ENCODE measurements at regions of chr15 and their contacts with region 1.

Region 1: GRCh38 chr15:56496635-56497034 is 31.7 kb upstream of the MNS1 start:
- DNase-seq: peak; percentile 78
- H3K4me3 ChIP-seq: no peak overlapping the region
- H3K27ac ChIP-seq: no peak overlapping the region
- H3K4me1 ChIP-seq: no peaks in the 10 kb centered on the region
- H3K27me3 ChIP-seq: peaks cover 7 to 19% of the 10 kb centered on the region in 2 experiments
- CTCF ChIP-seq: peak; percentile 43 to 47
- POLR2A ChIP-seq: no peak

Region 2: DNA sequence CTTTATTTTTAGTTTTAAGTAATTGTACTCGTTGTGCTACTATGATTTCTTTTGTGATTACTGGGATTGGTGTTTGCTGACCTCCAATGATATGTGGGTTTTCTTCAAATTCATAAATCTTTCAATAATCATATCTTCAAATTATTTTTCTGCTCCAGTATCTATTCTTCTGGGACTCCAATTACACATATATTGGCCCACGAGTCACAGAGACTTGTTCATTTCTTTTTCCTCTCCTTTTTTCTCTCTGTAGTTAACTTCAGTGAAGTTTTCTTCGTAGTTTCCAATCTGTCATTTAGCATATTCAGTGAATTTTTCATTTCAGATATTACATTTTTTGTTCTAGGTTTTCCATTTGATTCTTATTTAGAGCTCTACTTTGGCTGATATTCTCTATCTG is 274.3 kb before region 1 on chr15:
- CTCF ChIA-PET with region 1: no interaction called
- POLR2A ChIA-PET with region 1: no interaction called
- dilution Hi-C with region 1: no loop called
- intact Hi-C with region 1: no loop called
- DNase-seq: no peak
- H3K4me3 ChIP-seq: no peak overlapping the region
- H3K27ac ChIP-seq: no peak overlapping the region
- H3K4me1 ChIP-seq: no peaks in the 10 kb centered on the region
- H3K27me3 ChIP-seq: no peaks in the 10 kb centered on the region
- CTCF ChIP-seq: no peak
- POLR2A ChIP-seq: no peak

Region 3: GRCh38 chr15:56460071-56460470 is 36.6 kb before region 1 on chr15:
- CTCF ChIA-PET with region 1: no interaction called
- POLR2A ChIA-PET with region 1: no interaction called
- dilution Hi-C with region 1: no loop called
- intact Hi-C with region 1: no loop called
- DNase-seq: no peak
- H3K4me3 ChIP-seq: no peak overlapping the region
- H3K27ac ChIP-seq: no peak overlapping the region
- H3K4me1 ChIP-seq: peaks cover 5% of the 10 kb centered on the region
- H3K27me3 ChIP-seq: no peaks in the 10 kb centered on the region
- CTCF ChIP-seq: no peak
- POLR2A ChIP-seq: no peak

Region 4: DNA sequence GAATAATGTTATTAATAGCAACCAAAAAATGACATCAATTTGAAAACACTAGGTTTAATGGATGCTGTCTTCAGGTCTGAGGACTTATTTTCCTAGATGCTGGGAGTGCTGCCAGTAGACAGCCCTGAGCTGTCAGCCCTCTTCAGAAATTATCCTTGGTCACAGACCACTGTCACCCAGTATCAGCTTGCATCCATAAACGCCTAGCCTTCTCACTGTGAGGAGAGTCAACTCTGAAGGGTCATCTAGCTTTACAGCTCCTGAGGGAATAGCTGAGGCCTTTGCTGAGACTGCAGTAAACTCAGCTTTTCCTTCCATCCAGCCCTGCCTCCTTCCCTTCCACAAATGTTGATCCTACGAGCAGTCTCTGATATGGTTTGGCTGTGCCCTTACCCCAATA is 12.3 kb before region 1 on chr15:
- CTCF ChIA-PET with region 1: interaction called, 13 read pairs
- POLR2A ChIA-PET with region 1: no interaction called
- dilution Hi-C with region 1: no loop called
- intact Hi-C with region 1: no loop called
- DNase-seq: no peak
- H3K4me3 ChIP-seq: no peak overlapping the region
- H3K27ac ChIP-seq: no peak overlapping the region
- H3K4me1 ChIP-seq: no peaks in the 10 kb centered on the region
- H3K27me3 ChIP-seq: peaks cover 7 to 13% of the 10 kb centered on the region in 2 experiments
- CTCF ChIP-seq: no peak
- POLR2A ChIP-seq: no peak

Region 5: GRCh38 chr15:56732921-56733797 is 236.5 kb after region 1 on chr15 and contains the start of gene ZNF280D:
- CTCF ChIA-PET with region 1: interaction called, 4 read pairs
- POLR2A ChIA-PET with region 1: no interaction called
- dilution Hi-C with region 1: no loop called
- intact Hi-C with region 1: loop called (anchors 5 kb)
- DNase-seq: peak; percentile 91
- H3K4me3 ChIP-seq: peak within 1 kb of the TSS; percentile 19 to 70 (median 68)
- H3K27ac ChIP-seq: peak within 1 kb of the TSS; percentile 59
- H3K4me1 ChIP-seq: peaks cover 34% of the 10 kb centered on the region
- H3K27me3 ChIP-seq: no peaks in the 10 kb centered on the region
- CTCF ChIP-seq: no peak
- POLR2A ChIP-seq: peak; percentile 72
- total RNA-seq, gene ZNF280D: 35.8 and 42.1 TPM in 2 replicates

Region 6: DNA sequence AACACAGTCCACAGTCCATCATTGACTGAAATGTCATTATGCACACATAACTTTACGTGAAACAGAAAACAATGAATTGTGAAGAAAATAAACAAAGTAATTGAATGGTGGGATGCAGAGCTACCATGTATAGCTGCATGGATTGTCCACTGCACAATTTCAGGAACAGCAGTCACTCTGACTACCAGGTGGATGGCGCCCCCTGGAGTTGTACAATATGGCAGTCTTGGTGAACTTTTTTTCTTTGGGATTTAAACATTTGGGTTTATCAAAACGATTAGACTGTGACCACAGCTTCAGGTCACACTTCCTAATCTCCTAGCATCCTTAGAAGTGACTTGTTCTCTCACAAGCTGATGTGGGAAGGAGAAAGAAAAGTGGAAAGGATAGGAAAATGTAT is 372.9 kb after region 1 on chr15:
- CTCF ChIA-PET with region 1: interaction called, 89 read pairs
- POLR2A ChIA-PET with region 1: no interaction called
- dilution Hi-C with region 1: no loop called
- intact Hi-C with region 1: loop called (anchors 1 kb)
- DNase-seq: peak; percentile 31
- H3K4me3 ChIP-seq: no peak overlapping the region
- H3K27ac ChIP-seq: no peak overlapping the region
- H3K4me1 ChIP-seq: peaks cover 16% of the 10 kb centered on the region
- H3K27me3 ChIP-seq: no peaks in the 10 kb centered on the region
- CTCF ChIP-seq: peak; percentile 41 to 46
- POLR2A ChIP-seq: no peak

Region 7: GRCh38 chr15:57213862-57214261 is 717.2 kb after region 1 on chr15:
- CTCF ChIA-PET with region 1: interaction called, 21 read pairs
- POLR2A ChIA-PET with region 1: no interaction called
- dilution Hi-C with region 1: no loop called
- intact Hi-C with region 1: loop called (anchors 5 kb)
- DNase-seq: peak; percentile 76
- H3K4me3 ChIP-seq: no peak overlapping the region
- H3K27ac ChIP-seq: no peak overlapping the region
- H3K4me1 ChIP-seq: peaks cover 17% of the 10 kb centered on the region
- H3K27me3 ChIP-seq: no peaks in the 10 kb centered on the region
- CTCF ChIP-seq: peak; percentile 18 to 24
- POLR2A ChIP-seq: no peak

Region 8: GRCh38 chr15:57306161-57306943 is 809.7 kb after region 1 on chr15:
- CTCF ChIA-PET with region 1: interaction called, 21 read pairs
- POLR2A ChIA-PET with region 1: no interaction called
- dilution Hi-C with region 1: no loop called
- intact Hi-C with region 1: loop called (anchors 1 kb)
- DNase-seq: peak; percentile 53
- H3K4me3 ChIP-seq: peak overlapping the region; percentile 33 to 39 (median 35)
- H3K27ac ChIP-seq: peak overlapping the region; percentile 32
- H3K4me1 ChIP-seq: peaks cover 11% of the 10 kb centered on the region
- H3K27me3 ChIP-seq: no peaks in the 10 kb centered on the region
- CTCF ChIP-seq: peak; percentile 90 to 91
- POLR2A ChIP-seq: no peak

Region 9: GRCh38 chr15:57541805-57542504 is 1045.3 kb after region 1 on chr15:
- CTCF ChIA-PET with region 1: interaction called, 15 read pairs
- POLR2A ChIA-PET with region 1: no interaction called
- dilution Hi-C with region 1: no loop called
- intact Hi-C with region 1: loop called (anchors 2 kb)
- DNase-seq: peak; percentile 77
- H3K4me3 ChIP-seq: no peak overlapping the region
- H3K27ac ChIP-seq: no peak overlapping the region
- H3K4me1 ChIP-seq: peaks cover 6% of the 10 kb centered on the region
- H3K27me3 ChIP-seq: no peaks in the 10 kb centered on the region
- CTCF ChIP-seq: peak; percentile 82 to 91
- POLR2A ChIP-seq: no peak